ENCODE measurements at regions of chr1 and their contacts with region 1.

Region 1: GRCh38 chr1:179087665-179088225 is 5.9 kb downstream of the TOR3A start:
- DNase-seq: no peak
- ATAC-seq: no peak
- H3K4me3 ChIP-seq: no peak overlapping the region
- H3K27ac ChIP-seq: peak overlapping the region in 1 of 2 experiments; percentile 24; a peak in 1 of 6 replicates
- H3K4me1 ChIP-seq: peaks cover 41% of the 10 kb centered on the region
- CTCF ChIP-seq: no peak
- EP300 ChIP-seq: no peak
- POLR2A ChIP-seq: no peak
- RAD21 ChIP-seq: no peak

Region 2: DNA sequence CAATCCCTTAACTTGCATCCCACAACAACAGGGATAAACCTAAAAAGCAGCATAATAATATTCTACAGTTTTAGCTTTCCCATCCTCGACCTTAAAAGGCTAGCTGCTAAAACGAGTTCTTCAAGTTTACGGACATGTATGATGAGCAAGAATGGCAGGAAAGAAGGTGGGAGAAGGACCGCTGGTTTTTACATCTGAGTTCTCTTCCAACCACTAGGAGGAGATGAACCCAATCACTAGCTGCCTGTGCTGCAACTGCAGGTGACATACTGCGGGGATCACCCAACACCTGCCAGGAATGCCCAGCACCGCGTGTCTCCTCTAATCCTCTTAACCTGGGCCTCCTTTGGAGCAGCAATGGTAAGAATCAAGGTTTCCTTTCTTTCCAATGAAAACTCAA is 17.6 kb after region 1 on chr1:
- CTCF ChIA-PET with region 1: interaction called, 11 read pairs
- POLR2A ChIA-PET with region 1: no interaction called
- DNase-seq: peak; percentile 55
- ATAC-seq: peak; percentile 62 to 76
- H3K4me3 ChIP-seq: no peak overlapping the region
- H3K27ac ChIP-seq: no peak overlapping the region
- H3K4me1 ChIP-seq: no peaks in the 10 kb centered on the region
- CTCF ChIP-seq: peak; percentile 29; the same call in 1 of the 3 replicates
- EP300 ChIP-seq: no peak
- POLR2A ChIP-seq: no peak
- RAD21 ChIP-seq: peak in 1 of 2 experiments; percentile 54; a peak in 2 of 5 replicates

Measured in A549 (cell line).